MCF 10A (cell line): ENCODE measurements at regions of chr1 and their contacts with region 1.

Region 1: GRCh38 chr1:107142140-107142542 is 1.3 kb downstream of the NTNG1 start:
- DNase-seq: peak; percentile 55
- H3K4me3 Mint-ChIP-seq: peak overlapping the region; percentile 76
- H3K27ac Mint-ChIP-seq: no peak overlapping the region
- H3K4me1 Mint-ChIP-seq: peaks cover 26% of the 10 kb centered on the region
- H3K27me3 Mint-ChIP-seq: no peaks in the 10 kb centered on the region
- CTCF ChIP-seq: peak; percentile 47

Region 2: GRCh38 chr1:106022312-106022902 is 1119.7 kb before region 1 on chr1:
- CTCF ChIA-PET with region 1: interaction called, 4 read pairs
- POLR2A ChIA-PET with region 1: no interaction called
- intact Hi-C with region 1: loop called (anchors 1 kb)
- DNase-seq: peak; percentile 20
- H3K4me3 Mint-ChIP-seq: no peak overlapping the region
- H3K27ac Mint-ChIP-seq: no peak overlapping the region
- H3K4me1 Mint-ChIP-seq: peaks cover 7% of the 10 kb centered on the region
- H3K27me3 Mint-ChIP-seq: no peaks in the 10 kb centered on the region
- CTCF ChIP-seq: peak; percentile 33

Region 3: DNA sequence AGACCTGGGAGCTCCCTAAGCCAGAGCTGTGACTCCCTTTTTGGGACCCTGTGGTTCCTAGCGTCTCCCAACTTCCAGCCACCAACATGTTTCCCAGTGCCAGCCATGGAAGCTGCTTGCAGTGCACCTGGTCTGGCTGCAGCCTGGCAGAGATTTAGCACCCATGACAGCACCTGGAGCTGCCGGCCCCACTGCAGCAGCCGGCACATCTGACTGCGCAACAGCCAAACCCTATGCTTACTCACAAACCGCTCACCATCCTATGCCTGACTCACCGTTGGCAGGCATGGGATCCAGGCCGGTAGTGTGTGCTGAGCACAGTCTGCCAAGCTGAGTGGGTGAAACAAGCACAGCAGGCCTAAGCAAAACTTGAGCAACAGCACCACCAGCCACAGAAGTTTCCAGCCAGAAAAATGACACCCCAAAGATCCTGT is 521.6 kb before region 1 on chr1:
- CTCF ChIA-PET with region 1: interaction called, 9 read pairs
- POLR2A ChIA-PET with region 1: no interaction called
- intact Hi-C with region 1: loop called (anchors 2 kb)
- DNase-seq: peak; percentile 97
- H3K4me3 Mint-ChIP-seq: no peak overlapping the region
- H3K27ac Mint-ChIP-seq: peak overlapping the region; percentile 47
- H3K4me1 Mint-ChIP-seq: peaks cover 12% of the 10 kb centered on the region
- H3K27me3 Mint-ChIP-seq: no peaks in the 10 kb centered on the region
- CTCF ChIP-seq: peak; percentile 20

Region 4: GRCh38 chr1:106798991-106799390 is 343.1 kb before region 1 on chr1:
- CTCF ChIA-PET with region 1: interaction called, 3 read pairs
- POLR2A ChIA-PET with region 1: no interaction called
- intact Hi-C with region 1: loop called (anchors 10 kb)
- DNase-seq: peak; percentile 34
- H3K4me3 Mint-ChIP-seq: no peak overlapping the region
- H3K27ac Mint-ChIP-seq: no peak overlapping the region
- H3K4me1 Mint-ChIP-seq: no peaks in the 10 kb centered on the region
- H3K27me3 Mint-ChIP-seq: no peaks in the 10 kb centered on the region
- CTCF ChIP-seq: no peak

Region 5: GRCh38 chr1:106980071-106980470 is 162.1 kb before region 1 on chr1:
- CTCF ChIA-PET with region 1: interaction called, 13 read pairs
- POLR2A ChIA-PET with region 1: no interaction called
- intact Hi-C with region 1: no loop called
- DNase-seq: no peak
- H3K4me3 Mint-ChIP-seq: no peak overlapping the region
- H3K27ac Mint-ChIP-seq: no peak overlapping the region
- H3K4me1 Mint-ChIP-seq: peaks cover 11% of the 10 kb centered on the region
- H3K27me3 Mint-ChIP-seq: no peaks in the 10 kb centered on the region
- CTCF ChIP-seq: no peak

Region 6: GRCh38 chr1:107056426-107057196 is 85.5 kb before region 1 on chr1 and contains the start of gene PRMT6:
- CTCF ChIA-PET with region 1: no interaction called
- POLR2A ChIA-PET with region 1: interaction called, 3 read pairs
- intact Hi-C with region 1: loop called (anchors 2 kb)
- DNase-seq: peak; percentile 75
- H3K4me3 Mint-ChIP-seq: peak within 1 kb of the TSS; percentile 95
- H3K27ac Mint-ChIP-seq: peak within 1 kb of the TSS; percentile 86
- H3K4me1 Mint-ChIP-seq: peaks cover 12% of the 10 kb centered on the region
- H3K27me3 Mint-ChIP-seq: no peaks in the 10 kb centered on the region
- CTCF ChIP-seq: peak; percentile 8
- total RNA-seq, gene PRMT6: 11.7 and 14.0 TPM in 2 replicates

Region 7: DNA sequence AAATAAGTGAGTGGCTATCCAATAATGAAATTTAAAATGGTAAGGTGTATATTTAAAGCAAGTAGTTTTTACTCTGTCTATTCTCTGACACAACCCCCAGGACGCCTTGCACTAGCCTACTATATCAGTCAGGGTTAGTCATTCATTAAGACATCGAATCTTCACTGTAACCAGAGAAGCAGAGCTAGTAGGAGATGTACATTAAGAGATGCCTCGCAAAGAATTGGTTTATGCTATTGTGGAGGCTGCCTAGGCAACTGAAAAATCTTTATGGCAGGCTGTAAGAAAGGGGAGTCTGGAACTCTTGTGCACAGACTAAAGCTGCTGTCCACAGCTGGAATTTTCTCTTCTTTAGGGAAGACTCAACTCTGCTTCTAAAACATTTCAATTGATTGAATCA is 27.5 kb after region 1 on chr1:
- CTCF ChIA-PET with region 1: interaction called, 10 read pairs
- POLR2A ChIA-PET with region 1: no interaction called
- intact Hi-C with region 1: no loop called
- DNase-seq: no peak
- H3K4me3 Mint-ChIP-seq: no peak overlapping the region
- H3K27ac Mint-ChIP-seq: no peak overlapping the region
- H3K4me1 Mint-ChIP-seq: no peaks in the 10 kb centered on the region
- H3K27me3 Mint-ChIP-seq: no peaks in the 10 kb centered on the region
- CTCF ChIP-seq: no peak

Region 8: DNA sequence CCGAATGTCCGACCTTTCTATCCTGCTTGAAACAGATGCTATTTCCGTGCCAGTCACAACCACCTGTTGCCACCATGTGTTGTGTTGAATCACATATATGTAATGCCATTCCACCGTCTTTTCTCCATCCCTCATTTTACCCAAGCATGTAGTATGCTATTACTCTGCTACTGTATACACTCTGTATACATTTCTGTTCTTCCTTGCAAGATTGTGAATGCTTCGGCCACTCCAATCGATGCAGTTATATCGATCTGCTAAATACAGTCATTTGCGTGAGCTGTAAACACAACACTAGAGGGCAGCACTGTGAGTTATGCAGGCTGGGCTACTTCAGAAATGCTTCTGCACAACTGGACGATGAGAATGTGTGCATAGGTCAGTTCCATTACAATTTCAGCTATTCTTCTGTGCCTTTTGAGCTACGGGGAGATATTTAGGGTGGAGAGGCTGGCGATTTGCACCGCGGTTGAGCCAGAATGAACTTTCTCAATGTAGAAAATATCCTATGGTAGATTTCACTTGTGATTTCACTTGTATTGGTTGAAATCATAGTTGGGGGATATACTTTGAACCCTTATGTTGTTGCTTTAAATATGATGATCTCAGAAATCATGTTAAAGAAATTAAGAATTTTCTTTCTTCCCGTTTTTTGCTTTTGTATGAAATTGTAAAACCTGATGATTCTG is 288.5 kb after region 1 on chr1:
- CTCF ChIA-PET with region 1: no interaction called
- POLR2A ChIA-PET with region 1: no interaction called
- intact Hi-C with region 1: no loop called
- DNase-seq: peak; percentile 70
- H3K4me3 Mint-ChIP-seq: no peak overlapping the region
- H3K27ac Mint-ChIP-seq: no peak overlapping the region
- H3K4me1 Mint-ChIP-seq: peaks cover 6% of the 10 kb centered on the region
- H3K27me3 Mint-ChIP-seq: no peaks in the 10 kb centered on the region
- CTCF ChIP-seq: peak; percentile 73

Region 9: DNA sequence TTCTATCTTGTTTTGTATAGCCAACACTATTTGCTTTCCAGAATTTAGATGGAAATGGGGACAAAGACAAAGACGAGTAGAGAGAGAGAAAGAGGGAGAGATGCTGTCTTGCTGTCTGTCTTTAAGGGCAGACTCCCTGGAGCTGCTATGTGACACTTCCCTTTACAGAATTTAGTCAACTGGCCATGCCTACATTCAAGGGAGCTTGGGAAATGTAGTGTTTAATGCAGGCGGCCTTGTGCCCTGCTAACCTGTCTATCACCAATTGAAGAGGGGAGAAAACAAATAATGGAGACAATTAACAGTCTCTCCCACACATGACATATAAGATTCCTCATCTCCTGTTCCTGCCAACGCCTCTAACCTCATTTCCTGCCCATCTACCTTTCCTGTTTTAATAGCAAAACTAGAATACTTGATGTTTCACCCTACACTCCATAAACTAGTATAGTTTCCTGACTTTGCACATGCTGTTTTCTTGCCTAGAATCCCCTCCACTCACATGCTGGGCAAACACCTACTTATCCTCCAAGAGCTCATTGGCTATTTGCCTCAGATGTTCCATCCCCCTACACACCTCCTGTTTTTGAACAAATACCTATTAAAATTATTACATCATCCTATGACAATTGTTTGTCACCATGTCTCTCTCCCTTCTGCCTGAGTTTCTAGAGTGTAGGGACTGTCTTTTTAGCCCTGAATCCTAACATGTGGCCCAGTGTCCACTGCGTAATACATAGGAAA is 940.8 kb after region 1 on chr1:
- CTCF ChIA-PET with region 1: no interaction called
- POLR2A ChIA-PET with region 1: no interaction called
- intact Hi-C with region 1: no loop called
- DNase-seq: no peak
- H3K4me3 Mint-ChIP-seq: no peak overlapping the region
- H3K27ac Mint-ChIP-seq: no peak overlapping the region
- H3K4me1 Mint-ChIP-seq: no peaks in the 10 kb centered on the region
- H3K27me3 Mint-ChIP-seq: no peaks in the 10 kb centered on the region
- CTCF ChIP-seq: no peak